Calu3 (cell line): ENCODE measurements at regions of chrX and their contacts with region 1.

Region 1: GRCh38 chrX:112941209-112941788 is 100.7 kb upstream of the AMOT start:
- DNase-seq: peak; percentile 28
- H3K4me3 Mint-ChIP-seq: no peak overlapping the region
- H3K27ac Mint-ChIP-seq: no peak overlapping the region
- H3K4me1 Mint-ChIP-seq: no peaks in the 10 kb centered on the region
- H3K27me3 Mint-ChIP-seq: no peaks in the 10 kb centered on the region
- CTCF ChIP-seq: no peak

Region 2: DNA sequence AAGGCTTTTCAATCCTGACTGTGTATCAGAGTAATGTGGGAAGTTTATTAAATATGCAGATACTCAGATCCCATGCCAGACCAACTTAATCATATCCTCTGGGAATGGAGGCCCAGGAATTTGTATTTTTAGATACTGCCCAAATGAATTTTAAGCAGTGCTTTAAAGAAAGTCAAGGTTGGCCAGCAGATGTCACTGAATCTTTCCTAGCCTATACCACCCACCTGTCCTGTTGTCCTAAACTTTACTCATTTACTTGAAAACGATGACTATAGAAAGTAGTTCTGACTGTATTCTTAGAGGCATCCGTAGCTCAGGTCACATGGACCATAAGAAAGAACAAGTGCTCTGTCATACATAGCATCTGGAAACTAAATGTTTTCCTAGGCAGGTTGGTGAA is 180.6 kb before region 1 on chrX:
- CTCF ChIA-PET with region 1: no interaction called
- intact Hi-C with region 1: loop called (anchors 2 kb)
- DNase-seq: no peak
- H3K4me3 Mint-ChIP-seq: no peak overlapping the region
- H3K27ac Mint-ChIP-seq: no peak overlapping the region
- H3K4me1 Mint-ChIP-seq: peaks cover 14% of the 10 kb centered on the region
- H3K27me3 Mint-ChIP-seq: no peaks in the 10 kb centered on the region
- CTCF ChIP-seq: no peak

Region 3: GRCh38 chrX:113001836-113002235 is 60.5 kb after region 1 on chrX:
- CTCF ChIA-PET with region 1: no interaction called
- intact Hi-C with region 1: loop called (anchors 10 kb)
- DNase-seq: no peak
- H3K4me3 Mint-ChIP-seq: no peak overlapping the region
- H3K27ac Mint-ChIP-seq: no peak overlapping the region
- H3K4me1 Mint-ChIP-seq: no peaks in the 10 kb centered on the region
- H3K27me3 Mint-ChIP-seq: no peaks in the 10 kb centered on the region
- CTCF ChIP-seq: no peak

Region 4: GRCh38 chrX:113222305-113222704 is 281.0 kb after region 1 on chrX:
- CTCF ChIA-PET with region 1: no interaction called
- intact Hi-C with region 1: no loop called
- DNase-seq: no peak
- H3K4me3 Mint-ChIP-seq: no peak overlapping the region
- H3K27ac Mint-ChIP-seq: no peak overlapping the region
- H3K4me1 Mint-ChIP-seq: no peaks in the 10 kb centered on the region
- H3K27me3 Mint-ChIP-seq: no peaks in the 10 kb centered on the region
- CTCF ChIP-seq: no peak